CD4-positive, alpha-beta T cell (primary cell): ENCODE measurements at regions of chrX and their contacts with region 1.

Region 1: DNA sequence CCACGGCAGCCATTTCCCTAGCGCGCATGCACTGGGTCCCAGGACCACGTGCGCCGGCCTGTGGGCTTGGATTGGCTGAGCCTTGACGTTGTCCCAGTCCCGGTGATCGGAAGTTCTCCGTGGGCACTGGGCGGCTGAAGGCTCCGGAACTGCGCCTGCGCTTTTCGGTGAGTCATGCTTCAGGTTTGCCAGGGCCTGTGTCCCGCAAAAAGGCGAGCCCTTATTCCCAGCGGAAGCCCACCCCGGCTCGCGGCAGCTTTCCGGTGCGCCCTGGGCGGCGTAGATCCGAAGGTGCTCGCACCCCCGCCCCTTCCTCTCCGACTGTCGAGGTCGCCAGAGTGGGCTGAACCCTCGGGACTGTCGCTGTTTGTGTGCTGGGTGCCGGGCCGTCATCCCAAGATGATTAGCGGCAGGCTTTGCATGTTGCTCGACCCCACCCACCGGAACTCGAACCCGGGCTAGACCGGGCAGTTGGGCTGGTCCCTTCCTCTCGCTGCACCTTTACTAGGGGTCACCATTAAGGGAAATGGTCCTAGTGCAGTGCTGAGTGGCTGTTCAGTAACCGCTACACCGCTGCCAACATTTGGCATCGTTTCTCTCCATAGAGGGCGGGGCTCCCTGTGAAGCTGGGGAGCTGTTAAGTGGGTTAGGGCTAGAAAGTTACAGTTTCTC is at the start of gene TCEANC:
- DNase-seq: peak; percentile 83 to 97 (median 93)
- ATAC-seq: peak; percentile 94
- H3K4me3 ChIP-seq: peak within 1 kb of the TSS; percentile 88
- H3K4me3 Mint-ChIP-seq: peak within 1 kb of the TSS; percentile 98
- H3K27ac ChIP-seq: peak within 1 kb of the TSS; percentile 90 to 93
- H3K27ac Mint-ChIP-seq: peak within 1 kb of the TSS; percentile 99
- H3K4me1 ChIP-seq: peaks cover 9% of the 10 kb centered on the region
- H3K4me1 Mint-ChIP-seq: peaks cover 18% of the 10 kb centered on the region
- H3K27me3 ChIP-seq: no peaks in the 10 kb centered on the region
- H3K27me3 Mint-ChIP-seq: no peaks in the 10 kb centered on the region
- CTCF ChIP-seq: no peak
- total RNA-seq, gene TCEANC: 6.5 to 8.3 TPM

Region 2: GRCh38 chrX:11758400-11759171 is 1894.6 kb before region 1 on chrX:
- CTCF ChIA-PET with region 1: no interaction called
- POLR2A ChIA-PET with region 1: no interaction called
- intact Hi-C with region 1: loop called in 1 of 2 experiments (anchors 5 kb)
- DNase-seq: peak; percentile 80 to 94 (median 88)
- ATAC-seq: peak; percentile 62
- H3K4me3 ChIP-seq: peak overlapping the region; percentile 95
- H3K4me3 Mint-ChIP-seq: peak overlapping the region; percentile 88
- H3K27ac ChIP-seq: peak overlapping the region; percentile 91 to 93
- H3K27ac Mint-ChIP-seq: peak overlapping the region; percentile 94
- H3K4me1 ChIP-seq: peaks cover 24% of the 10 kb centered on the region
- H3K4me1 Mint-ChIP-seq: peaks cover 33% of the 10 kb centered on the region
- H3K27me3 ChIP-seq: no peaks in the 10 kb centered on the region
- H3K27me3 Mint-ChIP-seq: no peaks in the 10 kb centered on the region
- CTCF ChIP-seq: no peak

Region 3: DNA sequence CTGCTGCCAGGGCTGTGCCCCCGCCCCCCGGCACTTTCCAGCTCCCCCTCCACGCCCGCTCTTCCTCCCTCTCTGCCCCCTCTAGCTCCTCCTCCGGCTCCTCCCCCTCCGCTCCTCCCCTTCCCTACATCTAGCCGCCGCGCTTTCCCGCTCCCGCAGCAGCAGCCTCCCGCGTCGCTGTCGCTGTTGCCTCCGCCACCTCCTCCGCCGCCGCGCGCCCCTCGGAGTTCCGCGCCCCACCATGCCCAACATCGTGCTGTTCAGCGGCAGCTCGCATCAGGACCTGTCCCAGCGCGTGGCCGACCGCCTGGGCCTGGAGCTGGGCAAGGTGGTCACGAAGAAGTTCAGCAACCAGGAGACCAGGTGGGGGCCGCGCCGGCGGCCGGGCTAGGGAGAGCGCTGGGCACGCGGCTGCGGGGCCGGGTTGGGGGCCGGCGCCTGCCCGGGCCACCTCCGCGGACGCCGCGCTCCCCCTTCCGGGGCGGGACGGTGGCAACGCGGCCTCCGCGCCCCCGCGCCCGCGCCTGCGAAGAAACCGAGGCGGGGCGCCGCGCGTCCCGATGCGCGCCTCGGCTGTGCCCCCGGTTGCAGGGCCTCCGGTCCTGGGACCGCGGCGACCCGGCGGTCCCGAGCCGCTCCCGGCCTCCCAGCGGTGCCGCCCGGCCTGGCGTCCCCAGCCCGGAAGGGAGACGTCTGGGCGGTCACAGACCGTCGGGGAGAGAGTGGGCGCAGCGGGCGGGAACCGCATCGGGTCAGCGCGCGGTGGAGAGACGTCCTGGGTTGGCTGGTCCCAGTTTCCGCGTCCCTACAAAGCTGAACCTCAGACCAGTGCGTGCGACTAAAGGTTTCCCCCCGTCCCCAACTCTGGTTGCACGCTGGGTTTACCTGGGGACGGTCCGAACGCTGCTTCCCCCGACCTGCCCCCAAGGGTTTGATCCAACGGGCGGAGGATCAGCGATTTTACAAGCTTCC is 861.6 kb before region 1 on chrX and contains the start of gene PRPS2:
- CTCF ChIA-PET with region 1: no interaction called
- POLR2A ChIA-PET with region 1: no interaction called
- intact Hi-C with region 1: loop called in 1 of 2 experiments (anchors 5 kb)
- DNase-seq: peak; percentile 46 to 84 (median 68)
- ATAC-seq: peak; percentile 95
- H3K4me3 ChIP-seq: peak within 1 kb of the TSS; percentile 77
- H3K4me3 Mint-ChIP-seq: peak within 1 kb of the TSS; percentile 89
- H3K27ac ChIP-seq: no peak within 1 kb of the TSS
- H3K27ac Mint-ChIP-seq: peak within 1 kb of the TSS; percentile 78
- H3K4me1 ChIP-seq: peaks cover 12% of the 10 kb centered on the region
- H3K4me1 Mint-ChIP-seq: peaks cover 36% of the 10 kb centered on the region
- H3K27me3 ChIP-seq: no peaks in the 10 kb centered on the region
- H3K27me3 Mint-ChIP-seq: no peaks in the 10 kb centered on the region
- CTCF ChIP-seq: no peak
- total RNA-seq, gene PRPS2: 13.2 to 17.7 TPM

Region 4: GRCh38 chrX:13506574-13506973 is 146.6 kb before region 1 on chrX:
- CTCF ChIA-PET with region 1: no interaction called
- POLR2A ChIA-PET with region 1: no interaction called
- intact Hi-C with region 1: loop called (anchors 2 kb)
- DNase-seq: peak; percentile 12 to 73 (median 38)
- ATAC-seq: no peak
- H3K4me3 ChIP-seq: no peak overlapping the region
- H3K4me3 Mint-ChIP-seq: no peak overlapping the region
- H3K27ac ChIP-seq: no peak overlapping the region
- H3K27ac Mint-ChIP-seq: no peak overlapping the region
- H3K4me1 ChIP-seq: no peaks in the 10 kb centered on the region
- H3K4me1 Mint-ChIP-seq: no peaks in the 10 kb centered on the region
- H3K27me3 ChIP-seq: no peaks in the 10 kb centered on the region
- H3K27me3 Mint-ChIP-seq: no peaks in the 10 kb centered on the region
- CTCF ChIP-seq: peak; percentile 76

Region 5: GRCh38 chrX:13688958-13689740 is 36.0 kb after region 1 on chrX and contains the start of gene RAB9A:
- CTCF ChIA-PET with region 1: interaction called, 5 read pairs
- POLR2A ChIA-PET with region 1: interaction called, 23 read pairs
- intact Hi-C with region 1: loop called (anchors 1 to 2 kb)
- DNase-seq: peak; percentile 59 to 87 (median 72)
- ATAC-seq: peak; percentile 88
- H3K4me3 ChIP-seq: peak within 1 kb of the TSS; percentile 81
- H3K4me3 Mint-ChIP-seq: peak within 1 kb of the TSS; percentile 95
- H3K27ac ChIP-seq: peak within 1 kb of the TSS; percentile 70 to 86
- H3K27ac Mint-ChIP-seq: peak within 1 kb of the TSS; percentile 93
- H3K4me1 ChIP-seq: peaks cover 29% of the 10 kb centered on the region
- H3K4me1 Mint-ChIP-seq: peaks cover 57% of the 10 kb centered on the region
- H3K27me3 ChIP-seq: no peaks in the 10 kb centered on the region
- H3K27me3 Mint-ChIP-seq: no peaks in the 10 kb centered on the region
- CTCF ChIP-seq: no peak
- total RNA-seq, gene RAB9A: 21.4 to 25.2 TPM

Region 6: DNA sequence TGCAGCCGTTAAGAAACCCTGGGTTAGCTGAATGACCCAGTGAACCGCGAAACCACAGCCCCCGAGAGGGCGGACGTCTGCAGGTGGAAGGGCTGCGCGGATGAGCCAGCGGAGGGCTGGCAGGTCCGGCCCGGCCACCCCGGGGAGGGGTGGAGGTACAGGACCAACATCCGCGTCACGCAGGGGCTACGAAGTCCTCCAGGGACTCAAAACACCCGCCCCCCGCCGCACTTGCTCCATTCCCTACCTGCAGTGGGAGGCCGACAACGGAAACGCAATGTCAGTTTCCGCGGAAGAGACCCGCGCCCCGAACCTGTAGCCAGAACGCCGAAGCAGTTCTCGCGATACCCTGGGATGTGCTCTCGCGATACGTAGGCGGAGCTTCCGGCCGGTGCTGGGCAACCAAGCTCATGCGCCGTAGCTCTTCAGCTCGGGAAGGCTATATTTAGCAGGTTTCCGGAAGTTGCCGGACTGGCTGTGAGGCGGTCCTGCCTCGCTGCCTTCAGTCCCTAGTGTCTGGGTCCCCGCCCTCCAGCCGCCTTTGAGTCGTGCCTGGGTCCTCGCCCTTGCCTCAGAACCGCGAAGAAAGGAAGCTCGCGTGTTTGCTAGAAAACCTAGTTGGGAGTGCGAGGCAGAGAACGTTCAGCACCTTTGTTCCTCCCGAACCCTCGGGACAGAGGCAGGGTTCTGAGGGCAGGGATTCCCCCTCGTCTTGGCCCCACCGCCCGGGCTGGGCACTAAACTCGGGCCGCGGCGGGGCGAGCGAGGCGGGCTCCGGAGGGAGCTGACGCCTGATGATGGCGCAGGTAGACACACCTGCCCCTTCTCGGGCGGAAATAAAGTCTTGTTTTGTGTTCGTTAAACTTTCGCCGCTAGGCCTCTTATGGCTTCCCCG is 81.4 kb after region 1 on chrX and contains the starts of genes OFD1 and TRAPPC2:
- CTCF ChIA-PET with region 1: interaction called, 3 read pairs
- POLR2A ChIA-PET with region 1: interaction called, 20 read pairs
- intact Hi-C with region 1: loop called in 1 of 2 experiments (anchors 5 kb)
- DNase-seq: peak; percentile 81 to 95 (median 87)
- ATAC-seq: peak; percentile 86
- H3K4me3 ChIP-seq: peak within 1 kb of the TSS; percentile 92
- H3K4me3 Mint-ChIP-seq: peak within 1 kb of the TSS; percentile 99
- H3K27ac ChIP-seq: peak within 1 kb of the TSS; percentile 96 to 99
- H3K27ac Mint-ChIP-seq: peak within 1 kb of the TSS; percentile 100
- H3K4me1 ChIP-seq: peaks cover 19% of the 10 kb centered on the region
- H3K4me1 Mint-ChIP-seq: peaks cover 56% of the 10 kb centered on the region
- H3K27me3 ChIP-seq: no peaks in the 10 kb centered on the region
- H3K27me3 Mint-ChIP-seq: no peaks in the 10 kb centered on the region
- CTCF ChIP-seq: no peak
- total RNA-seq, gene OFD1: 59.1 to 60.0 TPM
- total RNA-seq, gene TRAPPC2: 21.4 to 22.3 TPM

Region 7: GRCh38 chrX:13750204-13750603 is 97.0 kb after region 1 on chrX:
- CTCF ChIA-PET with region 1: no interaction called
- POLR2A ChIA-PET with region 1: no interaction called
- intact Hi-C with region 1: loop called (anchors 2 kb)
- DNase-seq: peak in 4 of 14 experiments; percentile 15 to 67 (median 60)
- ATAC-seq: peak; percentile 65
- H3K4me3 ChIP-seq: no peak overlapping the region
- H3K4me3 Mint-ChIP-seq: no peak overlapping the region
- H3K27ac ChIP-seq: no peak overlapping the region
- H3K27ac Mint-ChIP-seq: peak overlapping the region; percentile 6
- H3K4me1 ChIP-seq: peaks cover 3% of the 10 kb centered on the region
- H3K4me1 Mint-ChIP-seq: peaks cover 28% of the 10 kb centered on the region
- H3K27me3 ChIP-seq: no peaks in the 10 kb centered on the region
- H3K27me3 Mint-ChIP-seq: no peaks in the 10 kb centered on the region
- CTCF ChIP-seq: peak; percentile 62